RWPE1 (cell line): ENCODE measurements at regions of chr15 and their contacts with region 1.

Region 1: GRCh38 chr15:95580130-95580529 is 750.4 kb upstream of the NR2F2 start:
- DNase-seq: no peak
- H3K27ac ChIP-seq: no peak overlapping the region
- CTCF ChIP-seq: no peak

Region 2: GRCh38 chr15:95494971-95495541 is 85.1 kb before region 1 on chr15:
- CTCF ChIA-PET with region 1: no interaction called
- POLR2A ChIA-PET with region 1: no interaction called
- DNase-seq: no peak
- H3K27ac ChIP-seq: no peak overlapping the region
- CTCF ChIP-seq: no peak

Region 3: GRCh38 chr15:95799286-95800200 is 219.4 kb after region 1 on chr15:
- CTCF ChIA-PET with region 1: interaction called, 11 read pairs
- POLR2A ChIA-PET with region 1: no interaction called
- DNase-seq: peak; percentile 86
- H3K27ac ChIP-seq: no peak overlapping the region
- CTCF ChIP-seq: no peak